H1 (cell line): ENCODE measurements at regions of chr19 and their contacts with region 1.

Region 1: GRCh38 chr19:4988770-4989251 is 19.9 kb downstream of the KDM4B start:
- DNase-seq: no peak
- H3K4me3 ChIP-seq: no peak overlapping the region
- H3K27ac ChIP-seq: peak overlapping the region; percentile 5; the same call in 1 of the 2 replicates
- H3K4me1 ChIP-seq: peaks cover 0 to 2% (median 2%) of the 10 kb centered on the region in 4 experiments; a peak in 4 of 7 replicates
- H3K27me3 ChIP-seq: no peaks in the 10 kb centered on the region
- CTCF ChIP-seq: no peak
- EP300 ChIP-seq: no peak
- POLR2A ChIP-seq: no peak
- RAD21 ChIP-seq: no peak

Region 2: DNA sequence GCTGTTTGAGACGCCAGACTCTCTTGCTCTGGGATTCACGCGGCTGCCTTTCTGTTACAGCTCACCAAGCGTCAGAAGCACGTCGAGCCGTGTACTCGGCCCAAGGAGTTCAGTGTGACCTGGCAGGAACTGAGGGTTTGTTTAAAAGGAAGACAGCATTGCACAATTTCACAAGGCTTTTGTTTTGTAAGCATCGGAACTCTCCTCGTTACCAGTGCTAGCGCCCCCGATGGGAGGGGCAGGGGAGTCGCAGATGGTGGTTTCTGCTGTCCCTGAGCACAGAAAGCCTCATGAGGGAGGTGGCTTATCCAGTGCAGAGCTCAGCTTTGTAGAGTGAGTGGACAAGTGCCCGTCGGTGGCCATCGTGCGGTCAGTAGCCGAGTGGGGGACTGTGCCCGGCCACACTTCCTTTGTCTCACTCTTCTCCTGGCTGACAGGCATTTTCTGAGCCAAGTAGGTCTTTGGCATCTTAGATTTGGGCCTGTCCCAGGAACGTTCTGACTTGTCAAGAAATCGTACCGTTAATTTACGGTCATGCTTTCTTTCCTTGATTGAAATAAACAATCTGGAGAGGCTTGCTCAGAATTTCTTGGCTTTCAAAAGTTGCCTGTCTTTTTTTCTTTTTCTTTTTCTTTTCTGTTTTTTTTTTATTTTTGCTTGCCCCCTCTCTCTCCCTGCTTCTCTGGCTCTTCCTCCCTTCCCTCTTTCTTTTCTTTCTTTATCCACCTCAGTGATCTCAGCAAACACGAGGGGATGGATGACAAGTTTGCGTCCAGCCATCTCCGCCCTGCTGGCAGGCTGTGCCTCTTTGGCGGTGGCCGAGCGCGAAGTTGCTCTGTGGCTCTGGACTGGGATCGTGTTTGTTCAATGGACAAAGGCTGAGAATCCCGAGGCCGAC is 12.2 kb before region 1 on chr19:
- CTCF ChIA-PET with region 1: interaction called, 10 read pairs
- POLR2A ChIA-PET with region 1: interaction called, 6 read pairs
- DNase-seq: peak in 1 of 2 experiments; percentile 70
- H3K4me3 ChIP-seq: no peak overlapping the region
- H3K27ac ChIP-seq: no peak overlapping the region
- H3K4me1 ChIP-seq: peaks cover 0 to 8% (median 2%) of the 10 kb centered on the region in 4 experiments; a peak in 6 of 7 replicates
- H3K27me3 ChIP-seq: no peaks in the 10 kb centered on the region
- CTCF ChIP-seq: peak; percentile 62 to 81 (median 69)
- EP300 ChIP-seq: no peak
- POLR2A ChIP-seq: no peak
- RAD21 ChIP-seq: peak in 1 of 2 experiments; percentile 31; a peak in 1 of 4 replicates

Region 3: GRCh38 chr19:5048091-5048726 is 59.4 kb after region 1 on chr19:
- CTCF ChIA-PET with region 1: no interaction called
- POLR2A ChIA-PET with region 1: no interaction called
- DNase-seq: peak; percentile 65 to 97
- H3K4me3 ChIP-seq: no peak overlapping the region
- H3K27ac ChIP-seq: no peak overlapping the region
- H3K4me1 ChIP-seq: peaks cover 0 to 8% (median 2%) of the 10 kb centered on the region in 4 experiments; a peak in 5 of 7 replicates
- H3K27me3 ChIP-seq: no peaks in the 10 kb centered on the region
- CTCF ChIP-seq: peak; percentile 98 to 99 (median 99)
- EP300 ChIP-seq: no peak
- POLR2A ChIP-seq: no peak
- RAD21 ChIP-seq: peak; percentile 99